ENCODE measurements at regions of chr17 and their contacts with region 1.

Region 1: GRCh38 chr17:34623841-34624766 is 44.7 kb downstream of the TMEM132E start:
- DNase-seq: no peak
- H3K4me3 ChIP-seq: no peak overlapping the region
- H3K27ac ChIP-seq: no peak overlapping the region
- H3K4me1 ChIP-seq: no peaks in the 10 kb centered on the region
- H3K27me3 ChIP-seq: peaks cover 16 to 23% of the 10 kb centered on the region in 2 experiments
- CTCF ChIP-seq: no peak
- POLR2A ChIP-seq: no peak

Region 2: DNA sequence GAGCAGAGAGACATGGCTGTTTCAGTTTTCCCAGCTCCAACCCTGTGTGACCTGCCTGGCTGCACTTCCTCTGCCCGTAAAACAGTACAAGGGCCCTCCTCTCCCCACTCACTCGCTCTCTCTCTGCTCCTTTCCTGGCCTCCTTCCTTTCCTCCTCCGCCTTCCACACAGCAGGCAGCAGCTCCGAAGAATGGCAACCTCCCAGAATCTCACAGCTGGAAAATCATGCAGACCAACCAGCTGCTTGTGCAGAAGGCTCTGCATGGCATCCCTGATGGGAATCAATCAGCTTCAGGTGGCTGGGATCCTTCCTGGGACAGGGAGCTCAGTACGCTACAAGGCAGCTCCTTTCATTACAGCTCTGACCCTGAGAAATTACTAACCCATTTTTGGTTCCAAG is 17.3 kb before region 1 on chr17:
- CTCF ChIA-PET with region 1: no interaction called
- POLR2A ChIA-PET with region 1: no interaction called
- dilution Hi-C with region 1: no loop called
- intact Hi-C with region 1: loop called (anchors 1 kb)
- DNase-seq: no peak
- H3K4me3 ChIP-seq: no peak overlapping the region
- H3K27ac ChIP-seq: no peak overlapping the region
- H3K4me1 ChIP-seq: no peaks in the 10 kb centered on the region
- H3K27me3 ChIP-seq: no peaks in the 10 kb centered on the region
- CTCF ChIP-seq: no peak
- POLR2A ChIP-seq: no peak

Measured in endothelial cell of umbilical vein (primary cell).